CD14-positive monocyte (primary cell): ENCODE measurements at regions of chr7 and their contacts with region 1.

Region 1: GRCh38 chr7:44240983-44241510 is 40.3 kb downstream of the YKT6 start:
- DNase-seq: peak; percentile 42 to 68 (median 57)
- H3K4me3 ChIP-seq: peak overlapping the region in 1 of 3 experiments; percentile 56
- H3K4me3 Mint-ChIP-seq: peak overlapping the region; percentile 56 to 84
- H3K27ac ChIP-seq: peak overlapping the region in 1 of 2 donors; percentile 5
- H3K27ac Mint-ChIP-seq: peak overlapping the region in 2 of 7 donors; percentile 42 to 61
- H3K4me1 ChIP-seq: peaks cover 0 to 3% of the 10 kb centered on the region in 2 donors
- H3K4me1 Mint-ChIP-seq: peaks cover 5% of the 10 kb centered on the region
- H3K27me3 ChIP-seq: no peaks in the 10 kb centered on the region
- H3K27me3 Mint-ChIP-seq: peaks cover 0 to 5% (median 3%) of the 10 kb centered on the region in 3 donors
- CTCF ChIP-seq: peak; percentile 62

Region 2: GRCh38 chr7:44200647-44201461 is 40.2 kb before region 1 on chr7 and contains the start of gene YKT6:
- intact Hi-C with region 1: no loop called
- DNase-seq: peak; percentile 89 to 92 (median 90)
- H3K4me3 ChIP-seq: peak within 1 kb of the TSS; percentile 63 to 87 (median 66)
- H3K4me3 Mint-ChIP-seq: peak within 1 kb of the TSS; percentile 85 to 89
- H3K27ac ChIP-seq: peak within 1 kb of the TSS in 1 of 2 donors; percentile 83
- H3K27ac Mint-ChIP-seq: peak within 1 kb of the TSS; percentile 74 to 92 (median 85)
- H3K4me1 ChIP-seq: peaks cover 12 to 15% of the 10 kb centered on the region in 2 donors
- H3K4me1 Mint-ChIP-seq: peaks cover 20% of the 10 kb centered on the region
- H3K27me3 ChIP-seq: no peaks in the 10 kb centered on the region
- H3K27me3 Mint-ChIP-seq: peaks cover 2 to 7% (median 4%) of the 10 kb centered on the region in 3 donors
- CTCF ChIP-seq: peak; percentile 62
- polyA plus RNA-seq, gene YKT6: 26.4 to 45.7 (median 35.2) TPM

Region 3: GRCh38 chr7:44213877-44214388 is 27.1 kb before region 1 on chr7:
- intact Hi-C with region 1: no loop called
- DNase-seq: no peak
- H3K4me3 ChIP-seq: no peak overlapping the region
- H3K4me3 Mint-ChIP-seq: no peak overlapping the region
- H3K27ac ChIP-seq: peak overlapping the region in 1 of 2 donors; percentile 41
- H3K27ac Mint-ChIP-seq: peak overlapping the region in 4 of 7 donors; percentile 3 to 69 (median 47)
- H3K4me1 ChIP-seq: no peaks in the 10 kb centered on the region
- H3K4me1 Mint-ChIP-seq: peaks cover 5% of the 10 kb centered on the region
- H3K27me3 ChIP-seq: no peaks in the 10 kb centered on the region
- H3K27me3 Mint-ChIP-seq: peaks cover 0 to 4% (median 2%) of the 10 kb centered on the region in 3 donors
- CTCF ChIP-seq: no peak

Region 4: GRCh38 chr7:44477063-44477830 is 236.2 kb after region 1 on chr7:
- intact Hi-C with region 1: loop called (anchors 5 kb)
- DNase-seq: peak; percentile 65 to 79 (median 65)
- H3K4me3 ChIP-seq: no peak overlapping the region
- H3K4me3 Mint-ChIP-seq: no peak overlapping the region
- H3K27ac ChIP-seq: no peak overlapping the region
- H3K27ac Mint-ChIP-seq: peak overlapping the region in 3 of 7 donors; percentile 31 to 41 (median 37)
- H3K4me1 ChIP-seq: no peaks in the 10 kb centered on the region
- H3K4me1 Mint-ChIP-seq: no peaks in the 10 kb centered on the region
- H3K27me3 ChIP-seq: no peaks in the 10 kb centered on the region
- H3K27me3 Mint-ChIP-seq: no peaks in the 10 kb centered on the region
- CTCF ChIP-seq: peak; percentile 88